ENCODE measurements at regions of chr22 and their contacts with region 1.

Region 1: GRCh38 chr22:35477911-35478582 is 62.6 kb upstream of the RASD2 start:
- DNase-seq: peak; percentile 50 to 76
- ATAC-seq: peak; percentile 35 to 83 (median 51)
- H3K4me3 ChIP-seq: no peak overlapping the region
- H3K27ac ChIP-seq: peak overlapping the region; percentile 30 to 75 (median 55)
- H3K4me1 ChIP-seq: peaks cover 0 to 27% (median 21%) of the 10 kb centered on the region in 9 donors
- H3K27me3 ChIP-seq: peaks cover 0 to 17% (median 0%) of the 10 kb centered on the region in 7 donors
- CTCF ChIP-seq: no peak

Region 2: DNA sequence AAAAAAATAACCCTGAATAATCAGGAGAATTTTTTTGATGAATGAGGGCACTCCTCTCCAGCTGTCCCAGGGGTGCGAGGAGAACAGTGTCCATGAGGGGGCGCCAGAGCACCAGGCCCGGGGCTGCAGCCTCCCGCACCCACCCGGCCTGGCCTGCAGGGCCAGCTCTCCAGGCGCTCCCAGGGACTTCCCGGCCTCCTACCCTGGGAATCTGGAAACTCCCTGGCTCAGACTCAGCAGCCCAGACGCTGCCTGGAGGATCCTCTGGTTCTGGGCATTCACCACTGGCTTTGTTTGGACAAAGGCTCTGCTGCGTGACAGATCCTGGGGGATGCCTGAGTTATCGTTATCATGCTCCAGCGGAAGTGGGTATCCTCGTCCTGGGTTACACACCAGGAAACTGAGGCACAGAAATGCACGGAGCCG is 47.1 kb before region 1 on chr22:
- intact Hi-C with region 1: no loop called
- DNase-seq: peak; percentile 90 to 91
- ATAC-seq: peak; percentile 94 to 99 (median 98)
- H3K4me3 ChIP-seq: no peak overlapping the region
- H3K27ac ChIP-seq: peak overlapping the region in 5 of 10 donors; percentile 14 to 69 (median 48)
- H3K4me1 ChIP-seq: peaks cover 0 to 14% (median 8%) of the 10 kb centered on the region in 9 donors
- H3K27me3 ChIP-seq: no peaks in the 10 kb centered on the region
- CTCF ChIP-seq: peak; percentile 94 to 99 (median 97)

Region 3: GRCh38 chr22:35454416-35455054 is 23.5 kb before region 1 on chr22:
- intact Hi-C with region 1: loop called in 1 of 10 experiments (anchors 1 kb)
- DNase-seq: peak in 1 of 2 donors; percentile 25
- ATAC-seq: peak; percentile 34 to 71 (median 62)
- H3K4me3 ChIP-seq: no peak overlapping the region
- H3K27ac ChIP-seq: no peak overlapping the region
- H3K4me1 ChIP-seq: no peaks in the 10 kb centered on the region
- H3K27me3 ChIP-seq: peaks cover 0 to 9% (median 0%) of the 10 kb centered on the region in 7 donors
- CTCF ChIP-seq: peak in 7 of 9 donors; percentile 22 to 51 (median 39)

Region 4: DNA sequence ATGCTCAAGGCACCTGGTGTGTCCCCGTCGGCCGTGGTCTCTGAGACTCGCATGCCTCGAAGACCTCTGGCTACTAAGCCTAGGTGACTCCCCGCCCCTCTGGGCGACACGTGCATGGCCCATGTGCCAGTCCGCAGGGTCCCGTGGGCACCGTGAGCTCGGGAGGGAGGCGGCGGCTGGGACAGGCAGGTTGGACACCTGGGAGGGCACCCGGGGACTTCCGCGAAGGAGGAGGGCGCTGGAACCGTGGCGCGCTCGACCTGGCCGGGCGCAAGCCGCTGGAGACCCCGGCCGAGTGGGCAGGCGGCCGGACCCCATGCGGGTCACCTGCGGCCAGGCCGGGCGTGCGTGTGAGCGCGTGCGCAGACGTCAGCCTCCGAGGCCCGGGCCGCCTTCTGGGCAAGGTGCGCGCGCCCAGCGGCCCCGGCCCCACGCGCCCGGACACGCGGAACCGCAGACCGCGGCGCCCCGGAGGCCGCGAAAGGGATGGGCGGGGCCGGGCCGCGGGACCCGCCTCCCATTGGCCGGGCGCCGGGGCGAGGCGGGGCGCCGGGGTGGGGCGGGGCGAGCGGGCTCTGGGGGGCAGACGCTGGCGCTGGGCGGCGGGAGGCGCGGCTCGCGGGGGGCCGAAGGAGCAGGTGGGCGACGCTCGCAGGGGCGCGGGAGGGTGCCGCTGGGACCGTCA is 62.0 kb after region 1 on chr22:
- intact Hi-C with region 1: loop called in 2 of 10 experiments (anchors 5 to 10 kb)
- DNase-seq: peak; percentile 55 to 77
- ATAC-seq: peak; percentile 36 to 91 (median 73)
- H3K4me3 ChIP-seq: peak overlapping the region; percentile 46 to 66 (median 59)
- H3K27ac ChIP-seq: peak overlapping the region; percentile 29 to 85 (median 68)
- H3K4me1 ChIP-seq: peaks cover 5 to 39% (median 23%) of the 10 kb centered on the region in 9 donors
- H3K27me3 ChIP-seq: peaks cover 0 to 57% (median 23%) of the 10 kb centered on the region in 7 donors
- CTCF ChIP-seq: no peak

Region 5: GRCh38 chr22:35627264-35628041 is 149.4 kb after region 1 on chr22:
- intact Hi-C with region 1: no loop called
- DNase-seq: peak; percentile 79 to 85
- ATAC-seq: peak; percentile 69 to 84 (median 78)
- H3K4me3 ChIP-seq: peak overlapping the region in 9 of 10 donors; percentile 28 to 71 (median 61)
- H3K27ac ChIP-seq: peak overlapping the region; percentile 11 to 93 (median 84)
- H3K4me1 ChIP-seq: peaks cover 3 to 37% (median 20%) of the 10 kb centered on the region in 9 donors
- H3K27me3 ChIP-seq: no peaks in the 10 kb centered on the region
- CTCF ChIP-seq: peak; percentile 17 to 75 (median 53)